Heart left ventricle (tissue), 16 donors: ENCODE measurements at regions of chr11 and their contacts with region 1.

Region 1: DNA sequence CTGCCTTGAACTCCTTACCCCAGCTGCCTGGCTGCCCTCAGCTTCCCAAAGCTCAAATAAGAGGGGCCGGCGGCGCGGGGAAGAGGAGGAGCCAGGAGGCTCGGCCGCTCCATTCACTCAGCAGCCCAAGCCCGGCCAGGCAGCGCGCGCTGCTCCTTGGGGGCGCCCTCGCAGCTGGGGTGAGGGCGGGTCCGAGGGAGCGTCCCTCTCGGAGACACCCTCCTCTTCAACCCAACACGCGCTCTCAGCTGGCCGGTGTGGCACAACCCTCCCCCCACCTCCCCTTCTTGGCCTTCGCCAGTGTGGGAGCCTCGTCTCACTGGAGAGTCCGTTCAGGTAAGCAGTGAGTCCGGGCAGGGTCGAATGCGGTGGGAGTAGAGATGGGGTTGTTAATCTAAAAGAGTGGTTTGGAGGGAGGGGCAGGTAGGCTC is at the start of gene WT1:
- DNase-seq: peak; percentile 58 to 79 (median 68)
- ATAC-seq: peak; percentile 52 to 81 (median 74)
- H3K4me3 ChIP-seq: peak within 1 kb of the TSS; percentile 35 to 90 (median 62)
- H3K27ac ChIP-seq: peak within 1 kb of the TSS; percentile 67 to 98 (median 88)
- H3K4me1 ChIP-seq: peaks cover 0 to 64% (median 13%) of the 10 kb centered on the region in 12 donors
- H3K27me3 ChIP-seq: peaks cover 19 to 100% (median 92%) of the 10 kb centered on the region in 9 donors
- CTCF ChIP-seq: no peak
- POLR2A ChIP-seq: no peak
- total RNA-seq, gene WT1: 1.3 to 16.6 (median 2.9) TPM

Region 2: DNA sequence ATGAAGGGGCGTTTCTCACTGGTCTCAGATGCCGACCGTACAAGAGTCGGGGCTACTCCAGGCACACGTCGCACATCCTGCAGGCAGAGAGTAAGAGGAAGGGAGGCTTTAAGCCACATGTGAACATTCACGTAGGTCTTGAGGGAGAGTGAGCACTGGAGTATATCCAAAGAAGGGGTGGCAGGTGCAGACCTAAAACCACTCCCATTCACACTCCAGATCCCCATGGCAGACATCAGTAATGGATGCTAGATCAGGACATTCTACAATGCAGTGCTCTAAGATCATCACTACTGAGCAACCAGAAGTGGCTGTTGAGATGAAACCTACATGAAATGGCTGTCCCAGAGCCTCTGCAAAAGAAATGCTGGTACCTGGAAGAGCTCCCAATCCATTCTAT is 39.2 kb before region 1 on chr11:
- intact Hi-C with region 1: no loop called
- DNase-seq: no peak
- ATAC-seq: no peak
- H3K4me3 ChIP-seq: no peak overlapping the region
- H3K27ac ChIP-seq: no peak overlapping the region
- H3K4me1 ChIP-seq: no peaks in the 10 kb centered on the region
- H3K27me3 ChIP-seq: peaks cover 0 to 12% (median 0%) of the 10 kb centered on the region in 9 donors
- CTCF ChIP-seq: no peak
- POLR2A ChIP-seq: no peak

Region 3: DNA sequence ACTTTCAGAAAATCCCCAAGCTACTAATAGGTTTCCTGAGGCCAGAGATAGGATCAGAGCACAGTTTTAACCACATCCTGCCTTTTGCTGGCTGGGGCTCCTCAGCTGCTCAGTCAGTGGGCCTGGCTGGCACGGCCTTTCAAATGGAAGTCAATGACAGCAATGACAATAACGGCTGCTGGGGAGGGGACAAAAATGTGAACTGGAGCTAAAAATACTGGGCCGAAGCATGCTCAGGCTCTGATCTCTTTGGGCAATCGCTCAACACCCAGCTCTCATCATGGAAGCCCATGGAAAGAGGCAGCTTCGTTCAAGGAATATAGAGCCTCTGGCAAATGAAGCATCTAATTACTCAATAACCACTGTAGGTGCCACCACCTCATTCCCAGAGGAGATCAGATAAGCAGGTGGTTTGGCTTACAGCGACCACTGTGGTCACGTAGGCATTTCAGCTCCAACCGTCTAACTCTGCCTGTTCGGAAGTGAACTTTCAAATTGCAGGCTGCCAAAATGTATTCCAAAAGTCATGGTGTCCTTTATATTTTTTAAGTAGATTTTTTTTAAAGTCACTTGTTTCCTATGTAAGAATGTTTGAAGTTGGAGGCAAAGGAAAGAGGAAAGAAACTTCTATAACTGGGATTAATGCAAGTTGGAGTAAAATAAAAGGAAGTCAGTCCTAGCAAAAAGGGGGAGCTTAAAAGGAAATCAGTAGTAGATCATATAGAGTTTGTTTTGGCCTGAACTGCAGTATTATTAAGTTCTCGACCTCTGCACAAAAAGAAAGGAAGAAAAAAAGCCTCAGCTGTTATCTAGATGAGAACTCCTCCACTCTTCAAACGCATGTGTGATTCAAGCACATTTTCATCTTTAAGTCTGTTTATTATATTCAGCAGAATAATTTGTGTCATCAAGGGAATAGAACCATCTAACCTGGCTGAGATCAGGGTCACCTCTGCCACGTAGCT is 14.3 kb before region 1 on chr11:
- intact Hi-C with region 1: loop called in 1 of 10 experiments (anchors 1 kb)
- DNase-seq: peak; percentile 55 to 70 (median 64)
- ATAC-seq: peak; percentile 73 to 95 (median 80)
- H3K4me3 ChIP-seq: no peak overlapping the region
- H3K27ac ChIP-seq: peak overlapping the region in 10 of 12 donors; percentile 13 to 72 (median 54)
- H3K4me1 ChIP-seq: peaks cover 0 to 37% (median 12%) of the 10 kb centered on the region in 12 donors
- H3K27me3 ChIP-seq: peaks cover 0 to 33% (median 6%) of the 10 kb centered on the region in 9 donors
- CTCF ChIP-seq: no peak
- POLR2A ChIP-seq: no peak

Region 4: DNA sequence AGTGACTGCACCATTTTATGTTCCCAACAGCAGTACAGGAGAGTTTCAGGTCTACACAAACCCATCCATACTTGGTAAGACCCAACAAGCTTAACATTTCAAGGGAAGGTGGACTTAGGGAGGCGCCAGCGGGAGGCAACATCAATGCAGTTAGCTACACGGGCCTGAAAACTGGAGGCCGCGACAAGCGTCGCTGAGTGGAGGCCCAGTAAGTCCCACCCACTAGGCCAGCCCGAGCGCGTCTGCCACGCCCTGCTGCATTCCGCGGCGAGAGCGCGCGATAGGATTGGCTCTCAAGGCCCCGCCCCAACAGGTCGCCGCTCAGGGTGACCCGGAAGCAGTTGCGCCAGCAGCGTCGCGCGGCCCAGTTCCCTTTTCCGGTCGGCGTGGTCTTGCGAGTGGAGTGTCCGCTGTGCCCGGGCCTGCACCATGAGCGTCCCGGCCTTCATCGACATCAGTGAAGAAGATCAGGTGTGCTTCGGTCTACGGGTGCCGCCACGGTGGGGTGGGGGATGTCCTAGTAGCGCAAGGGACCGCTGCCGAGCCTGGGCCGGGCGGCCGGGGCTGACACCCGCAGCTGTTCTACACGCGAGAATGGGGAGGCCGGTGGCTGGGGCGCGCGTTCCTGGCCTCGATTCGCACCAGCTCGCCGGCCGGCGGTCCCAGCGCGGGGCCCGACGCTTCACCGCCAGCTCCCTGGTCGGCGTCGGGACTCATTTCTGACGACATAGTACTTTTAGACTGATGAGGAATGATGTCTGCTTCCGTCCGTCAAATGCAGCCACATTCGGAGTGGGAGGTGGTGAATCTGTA is 148.1 kb after region 1 on chr11 and contains the start of gene EIF3M:
- intact Hi-C with region 1: loop called in 3 of 10 experiments (anchors 5 to 10 kb)
- DNase-seq: peak; percentile 97 to 99 (median 97)
- ATAC-seq: peak; percentile 100
- H3K4me3 ChIP-seq: peak within 1 kb of the TSS; percentile 60 to 96 (median 87)
- H3K27ac ChIP-seq: peak within 1 kb of the TSS; percentile 5 to 88 (median 82)
- H3K4me1 ChIP-seq: peaks cover 0 to 44% (median 25%) of the 10 kb centered on the region in 12 donors
- H3K27me3 ChIP-seq: peaks cover 0 to 7% (median 0%) of the 10 kb centered on the region in 9 donors
- CTCF ChIP-seq: peak in 1 of 12 donors; percentile 20
- POLR2A ChIP-seq: peak in 1 of 2 donors; percentile 50
- total RNA-seq, gene EIF3M: 143 to 269 (median 172) TPM